CD4-positive, alpha-beta memory T cell (primary cell): ENCODE measurements at regions of chr1 and their contacts with region 1.

Region 1: DNA sequence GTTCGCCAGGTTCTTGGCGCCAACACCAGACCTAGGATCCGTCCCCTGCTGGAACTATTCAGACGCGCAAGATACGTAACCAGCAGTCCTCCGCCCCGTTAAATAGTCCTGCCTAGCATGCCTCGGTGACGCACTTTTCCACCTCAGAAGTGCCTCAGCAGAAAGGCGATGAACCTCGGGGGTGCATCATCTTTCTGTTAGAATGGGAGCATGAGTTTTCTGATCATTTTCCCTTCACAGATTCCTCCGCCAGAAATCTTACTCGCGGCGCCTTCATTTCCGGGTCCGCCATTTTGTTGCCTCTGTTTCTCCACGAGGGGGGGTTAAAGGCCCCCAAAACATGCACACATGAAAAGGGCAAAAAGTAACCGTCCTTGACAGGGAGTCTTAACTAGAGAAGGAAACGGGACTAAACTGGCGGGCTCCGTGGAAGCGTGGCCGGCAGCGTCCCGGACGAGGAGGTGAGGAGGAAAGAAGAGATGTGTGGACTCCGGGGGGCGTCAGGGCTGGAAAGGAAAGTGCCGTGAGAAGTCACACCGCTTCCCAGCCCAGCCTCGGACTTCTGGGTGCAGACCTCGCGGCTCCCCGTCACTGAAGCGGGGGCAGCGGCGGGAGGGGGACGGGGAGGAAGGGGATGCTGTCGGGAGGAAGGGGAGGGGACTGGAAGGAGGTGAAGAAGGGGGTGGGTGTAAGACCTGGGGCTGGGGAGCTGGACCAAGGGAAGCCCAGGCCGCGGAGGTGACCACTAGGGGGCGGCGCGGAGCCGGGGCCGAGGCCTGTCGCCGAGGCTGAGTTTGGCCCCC is at the start of gene GABPB2:
- DNase-seq: peak; percentile 87 to 96 (median 88)
- H3K4me3 ChIP-seq: peak within 1 kb of the TSS; percentile 57 to 96
- H3K4me3 Mint-ChIP-seq: peak within 1 kb of the TSS; percentile 95 to 100 (median 99)
- H3K27ac ChIP-seq: peak within 1 kb of the TSS; percentile 97
- H3K27ac Mint-ChIP-seq: peak within 1 kb of the TSS; percentile 97 to 100 (median 100)
- H3K4me1 ChIP-seq: peaks cover 17% of the 10 kb centered on the region
- H3K4me1 Mint-ChIP-seq: peaks cover 13 to 34% (median 23%) of the 10 kb centered on the region in 4 donors
- H3K27me3 ChIP-seq: no peaks in the 10 kb centered on the region
- H3K27me3 Mint-ChIP-seq: no peaks in the 10 kb centered on the region
- total RNA-seq, gene GABPB2: 36.8 to 42.8 TPM

Region 2: GRCh38 chr1:151047925-151048645 is 22.6 kb before region 1 on chr1:
- CTCF ChIA-PET with region 1: interaction called, 9 read pairs
- POLR2A ChIA-PET with region 1: interaction called, 64 read pairs
- intact Hi-C with region 1: loop called (anchors 1 kb)
- DNase-seq: peak; percentile 59 to 72 (median 64)
- H3K4me3 ChIP-seq: peak overlapping the region; percentile 59 to 74
- H3K4me3 Mint-ChIP-seq: peak overlapping the region; percentile 86 to 95 (median 90)
- H3K27ac ChIP-seq: peak overlapping the region; percentile 74
- H3K27ac Mint-ChIP-seq: peak overlapping the region; percentile 88 to 98 (median 93)
- H3K4me1 ChIP-seq: peaks cover 38% of the 10 kb centered on the region
- H3K4me1 Mint-ChIP-seq: peaks cover 35 to 81% (median 61%) of the 10 kb centered on the region in 4 donors
- H3K27me3 ChIP-seq: no peaks in the 10 kb centered on the region
- H3K27me3 Mint-ChIP-seq: no peaks in the 10 kb centered on the region

Region 3: DNA sequence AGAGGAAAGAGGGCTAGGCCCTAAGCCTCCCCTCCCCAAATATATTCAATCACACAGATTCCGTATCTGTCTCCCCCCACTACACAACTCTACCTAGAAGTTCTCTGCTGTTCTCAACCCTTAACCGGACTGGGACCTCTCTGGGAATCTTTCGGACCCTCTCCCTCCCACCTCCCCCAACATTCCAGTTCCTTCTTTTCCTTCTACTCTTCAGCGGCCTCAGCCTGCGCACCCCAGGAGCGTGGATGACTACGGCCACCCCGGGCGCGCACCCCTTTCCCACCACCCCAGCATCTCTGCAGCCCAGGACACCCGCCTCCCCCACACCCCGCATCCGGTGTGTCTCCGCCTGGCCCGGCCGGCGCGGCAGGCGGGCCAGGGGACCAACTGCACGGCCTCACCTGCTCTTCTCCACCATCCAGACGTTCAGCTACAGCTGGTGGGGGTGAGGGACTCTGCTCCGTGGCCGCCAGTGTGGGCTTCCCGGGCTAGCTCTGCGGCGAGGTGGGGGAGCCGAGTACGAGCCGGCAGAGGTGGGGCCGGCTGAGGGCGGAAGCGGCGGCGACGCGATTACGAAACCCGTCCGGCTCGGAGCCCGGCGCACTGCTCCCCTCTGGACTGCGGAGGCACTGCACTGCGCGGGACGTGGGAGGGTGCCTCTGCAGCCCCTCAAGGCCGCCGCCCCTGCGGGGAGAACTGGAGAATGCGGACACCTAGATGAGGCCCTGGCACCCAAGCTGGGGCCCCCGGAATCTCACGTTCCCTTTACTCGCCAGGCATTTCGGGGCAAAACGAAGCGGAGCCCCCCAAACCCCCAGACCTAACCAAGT is 11.4 kb before region 1 on chr1 and contains the start of gene CDC42SE1:
- CTCF ChIA-PET with region 1: interaction called, 92 read pairs
- POLR2A ChIA-PET with region 1: interaction called, 124 read pairs
- intact Hi-C with region 1: loop called (anchors 1 kb)
- DNase-seq: peak; percentile 81 to 85 (median 85)
- H3K4me3 ChIP-seq: peak within 1 kb of the TSS; percentile 89 to 93
- H3K4me3 Mint-ChIP-seq: peak within 1 kb of the TSS; percentile 96 to 100 (median 100)
- H3K27ac ChIP-seq: peak within 1 kb of the TSS; percentile 90
- H3K27ac Mint-ChIP-seq: peak within 1 kb of the TSS; percentile 98 to 100 (median 99)
- H3K4me1 ChIP-seq: peaks cover 45% of the 10 kb centered on the region
- H3K4me1 Mint-ChIP-seq: peaks cover 31 to 70% (median 38%) of the 10 kb centered on the region in 4 donors
- H3K27me3 ChIP-seq: no peaks in the 10 kb centered on the region
- H3K27me3 Mint-ChIP-seq: peaks cover 0 to 1% of the 10 kb centered on the region in 2 donors
- total RNA-seq, gene CDC42SE1: 478 to 483 TPM